Aorta (tissue), 5 donors: ENCODE measurements at regions of chr1 and their contacts with region 1.

Region 1: GRCh38 chr1:230867903-230868735 is at the start of gene C1orf198:
- DNase-seq: peak; percentile 80 to 95
- ATAC-seq: peak; percentile 88
- H3K4me3 ChIP-seq: peak within 1 kb of the TSS; percentile 90 to 100
- H3K27ac ChIP-seq: peak within 1 kb of the TSS; percentile 79 to 88
- H3K4me1 ChIP-seq: no peaks in the 10 kb centered on the region
- H3K27me3 ChIP-seq: no peaks in the 10 kb centered on the region
- total RNA-seq, gene C1orf198: 117 to 172 TPM

Region 2: DNA sequence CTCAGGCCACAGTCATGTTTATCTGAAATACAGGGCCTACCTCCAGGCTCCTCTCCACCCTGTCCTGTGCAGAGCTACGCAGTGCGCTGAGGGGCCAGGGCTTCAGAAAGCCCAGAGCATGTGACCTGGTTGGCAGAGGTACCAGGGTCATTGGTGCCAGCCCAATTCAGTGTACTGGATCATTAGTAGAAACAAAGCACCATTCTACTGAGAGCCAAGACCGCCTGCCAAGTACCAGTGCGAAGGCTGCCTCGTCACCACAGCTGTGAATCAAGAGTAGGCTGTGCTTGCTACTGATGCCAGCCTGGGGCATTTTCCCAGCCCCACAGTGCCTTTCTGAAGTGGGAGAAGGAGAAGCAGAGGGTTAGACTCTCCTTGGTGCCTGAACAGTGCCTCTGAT is 61.1 kb before region 1 on chr1:
- intact Hi-C with region 1: loop called (anchors 5 kb)
- DNase-seq: peak; percentile 69 to 87
- ATAC-seq: peak; percentile 84
- H3K4me3 ChIP-seq: no peak overlapping the region
- H3K27ac ChIP-seq: peak overlapping the region; percentile 47 to 78
- H3K4me1 ChIP-seq: no peaks in the 10 kb centered on the region
- H3K27me3 ChIP-seq: no peaks in the 10 kb centered on the region

Region 3: GRCh38 chr1:230825063-230825721 is 42.9 kb before region 1 on chr1:
- intact Hi-C with region 1: loop called (anchors 2 to 5 kb)
- DNase-seq: no peak
- ATAC-seq: peak; percentile 65
- H3K4me3 ChIP-seq: no peak overlapping the region
- H3K27ac ChIP-seq: peak overlapping the region; percentile 79 to 96
- H3K4me1 ChIP-seq: peaks cover 0 to 6% of the 10 kb centered on the region in 2 donors
- H3K27me3 ChIP-seq: no peaks in the 10 kb centered on the region

Region 4: GRCh38 chr1:230849451-230850224 is 18.5 kb before region 1 on chr1:
- intact Hi-C with region 1: loop called in 1 of 2 experiments (anchors 1 kb)
- DNase-seq: peak; percentile 89 to 90
- ATAC-seq: peak; percentile 91
- H3K4me3 ChIP-seq: no peak overlapping the region
- H3K27ac ChIP-seq: peak overlapping the region; percentile 88 to 99
- H3K4me1 ChIP-seq: peaks cover 9 to 14% of the 10 kb centered on the region in 2 donors
- H3K27me3 ChIP-seq: no peaks in the 10 kb centered on the region

Region 5: DNA sequence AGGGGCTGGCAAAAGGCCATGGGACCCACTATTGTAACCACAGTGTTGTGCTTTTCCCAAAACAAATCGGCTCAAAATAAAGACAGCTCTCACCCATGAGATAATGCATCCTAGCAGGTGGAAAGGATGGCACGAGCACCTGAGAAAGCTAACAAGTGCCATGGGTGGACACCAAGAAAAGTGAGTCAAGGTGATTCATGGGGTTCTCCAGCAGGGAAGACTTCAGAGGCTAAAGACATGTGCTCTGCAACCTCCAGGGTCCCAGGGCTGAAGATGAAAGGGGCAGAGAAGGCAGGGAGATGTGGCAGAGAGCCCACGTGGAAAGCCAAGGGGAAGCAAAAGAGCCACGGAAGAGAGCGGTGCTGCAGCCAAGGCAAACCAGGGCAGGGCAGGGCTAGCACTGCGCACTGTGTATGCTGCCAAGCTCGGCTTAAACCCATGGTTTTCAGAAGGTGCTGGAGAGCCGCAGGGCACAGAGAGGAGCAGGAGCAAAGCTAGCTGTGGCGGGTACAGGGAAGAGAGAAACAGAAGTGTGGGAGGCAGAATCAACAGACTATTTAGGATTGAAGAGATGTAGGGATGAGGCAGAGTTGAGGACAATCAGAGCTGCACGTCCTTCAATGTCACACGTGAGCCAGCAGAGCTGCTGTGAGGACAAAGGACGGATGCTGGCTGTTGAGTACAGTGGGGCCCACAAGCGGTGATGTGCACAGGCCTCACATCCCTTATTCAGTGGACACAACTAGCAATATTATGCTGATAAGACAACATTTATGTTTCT is 42.0 kb after region 1 on chr1:
- intact Hi-C with region 1: loop called (anchors 2 to 5 kb)
- DNase-seq: peak; percentile 79 to 87
- ATAC-seq: peak; percentile 91
- H3K4me3 ChIP-seq: no peak overlapping the region
- H3K27ac ChIP-seq: peak overlapping the region; percentile 78 to 96
- H3K4me1 ChIP-seq: peaks cover 2 to 3% of the 10 kb centered on the region in 2 donors
- H3K27me3 ChIP-seq: no peaks in the 10 kb centered on the region

Region 6: DNA sequence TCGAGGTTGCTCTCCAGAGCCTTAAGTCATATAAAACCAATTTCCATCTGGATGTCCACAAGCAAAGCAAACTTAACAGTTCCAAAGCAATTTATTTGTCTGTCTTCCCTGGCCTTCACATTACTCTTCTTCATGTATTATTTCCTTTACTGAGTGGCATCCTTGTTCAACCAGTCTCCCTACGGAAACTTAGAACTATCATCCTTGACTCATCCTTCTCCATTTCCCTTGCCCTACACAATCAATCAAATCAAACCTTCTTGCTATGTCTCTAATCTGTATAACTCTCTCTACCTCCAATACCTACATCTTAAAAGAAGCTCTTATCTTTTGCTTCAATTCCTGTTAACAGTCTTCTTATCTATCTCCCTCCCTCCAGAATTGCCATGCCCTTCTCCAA is 528.5 kb after region 1 on chr1:
- intact Hi-C with region 1: no loop called
- DNase-seq: no peak
- ATAC-seq: no peak
- H3K4me3 ChIP-seq: no peak overlapping the region
- H3K27ac ChIP-seq: no peak overlapping the region
- H3K4me1 ChIP-seq: peaks cover 2 to 7% of the 10 kb centered on the region in 2 donors
- H3K27me3 ChIP-seq: no peaks in the 10 kb centered on the region